ENCODE measurements at regions of chr2 and their contacts with region 1.

Region 1: DNA sequence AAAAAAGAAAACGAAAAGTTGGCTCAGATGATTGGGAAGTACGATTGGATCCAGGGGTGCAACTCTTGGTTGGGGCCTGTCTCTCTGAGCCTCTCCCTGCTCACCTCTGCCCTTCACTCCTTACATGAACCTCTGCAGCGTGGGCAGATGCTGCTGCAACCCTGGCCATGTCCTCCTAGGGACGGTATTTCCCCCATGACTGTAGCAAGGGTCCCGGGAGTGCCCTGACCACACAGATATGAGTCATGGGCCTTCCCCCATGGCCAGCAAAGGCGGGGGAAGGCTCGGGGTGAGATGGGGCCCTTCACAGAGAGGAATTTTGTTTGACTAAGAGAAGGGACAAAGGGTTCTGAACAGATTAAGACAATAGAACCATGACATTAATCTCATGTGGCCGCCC is 129.0 kb downstream of the NCK2 start:
- DNase-seq: peak; percentile 89
- H3K4me3 Mint-ChIP-seq: peak overlapping the region; percentile 3
- H3K27ac Mint-ChIP-seq: peak overlapping the region; percentile 87
- H3K4me1 Mint-ChIP-seq: peaks cover 92% of the 10 kb centered on the region
- H3K27me3 Mint-ChIP-seq: no peaks in the 10 kb centered on the region

Region 2: DNA sequence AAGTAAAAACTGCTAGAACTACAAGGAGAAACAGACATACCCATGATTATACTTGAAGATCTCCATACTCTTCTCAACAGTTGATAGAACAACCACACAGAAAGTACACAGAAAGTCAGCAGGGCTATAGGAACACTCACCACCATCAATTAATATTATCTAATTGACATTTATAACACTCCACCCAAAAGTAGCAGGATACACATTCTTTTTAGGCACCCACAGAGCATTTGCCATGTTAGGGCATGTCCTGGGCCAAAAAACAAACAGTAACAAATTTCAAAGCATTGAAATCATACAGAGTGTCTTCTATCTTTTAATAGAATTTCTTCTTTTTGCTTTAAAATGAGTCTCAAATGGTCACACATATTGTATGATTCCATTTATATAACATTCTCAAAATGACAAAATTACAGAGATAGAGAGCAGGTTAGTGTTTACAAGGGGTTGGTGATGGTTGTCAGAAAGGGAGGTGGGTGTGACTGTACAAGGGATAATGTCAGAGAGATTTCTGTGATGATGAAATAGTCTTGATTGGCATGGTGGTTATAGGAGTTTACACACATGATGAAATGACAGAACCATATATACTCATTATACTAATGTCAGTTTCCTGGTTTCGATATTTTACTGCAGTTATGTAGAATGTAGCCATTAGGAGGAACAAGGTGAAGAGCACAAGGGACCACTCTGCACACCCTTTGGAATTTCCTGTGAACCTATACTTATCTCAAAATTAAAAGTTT is 46.2 kb before region 1 on chr2:
- CTCF ChIA-PET with region 1: no interaction called
- POLR2A ChIA-PET with region 1: no interaction called
- intact Hi-C with region 1: loop called (anchors 2 kb)
- DNase-seq: no peak
- H3K4me3 Mint-ChIP-seq: no peak overlapping the region
- H3K27ac Mint-ChIP-seq: peak overlapping the region; percentile 70
- H3K4me1 Mint-ChIP-seq: peaks cover 94% of the 10 kb centered on the region
- H3K27me3 Mint-ChIP-seq: no peaks in the 10 kb centered on the region

Region 3: GRCh38 chr2:105836840-105837692 is 36.7 kb before region 1 on chr2:
- CTCF ChIA-PET with region 1: no interaction called
- POLR2A ChIA-PET with region 1: no interaction called
- intact Hi-C with region 1: loop called (anchors 2 kb)
- DNase-seq: peak; percentile 74
- H3K4me3 Mint-ChIP-seq: peak overlapping the region; percentile 37
- H3K27ac Mint-ChIP-seq: peak overlapping the region; percentile 81
- H3K4me1 Mint-ChIP-seq: peaks cover 83% of the 10 kb centered on the region
- H3K27me3 Mint-ChIP-seq: no peaks in the 10 kb centered on the region

Region 4: DNA sequence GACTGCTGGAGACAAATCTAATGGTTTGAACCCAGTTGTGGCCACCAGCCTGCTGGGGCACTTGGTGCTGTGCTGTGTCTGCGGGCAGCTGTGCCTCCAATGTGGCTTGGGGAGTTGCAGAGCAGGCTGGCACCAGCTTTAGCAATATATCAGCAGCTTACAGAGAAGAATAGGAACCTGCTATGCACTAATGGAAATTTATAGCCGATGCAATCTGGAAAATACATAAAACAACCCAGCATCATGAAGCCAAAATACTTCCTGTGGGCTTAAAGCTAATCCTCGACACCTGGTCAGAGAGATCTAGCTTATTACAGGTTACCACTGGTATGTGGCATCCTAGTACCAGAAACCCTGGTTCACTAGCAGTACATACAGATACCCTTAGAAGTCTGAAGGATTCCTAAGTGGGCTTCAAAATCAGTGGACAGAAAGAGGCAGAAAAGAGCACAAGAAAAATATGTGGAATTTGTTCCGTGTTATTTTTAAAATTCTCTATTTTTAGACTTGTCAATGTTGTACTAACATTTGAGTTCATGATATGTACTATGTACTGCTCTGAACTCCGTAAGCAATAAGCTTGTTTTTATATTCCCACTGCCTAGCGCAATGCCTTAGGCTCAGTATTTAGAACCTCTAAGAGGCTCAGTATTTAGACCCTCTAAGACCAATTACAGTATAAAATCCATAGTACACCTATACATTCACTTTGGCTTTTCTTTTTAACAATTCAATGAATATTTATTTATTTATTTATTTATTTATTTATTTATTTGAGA is 125.7 kb after region 1 on chr2:
- CTCF ChIA-PET with region 1: no interaction called
- POLR2A ChIA-PET with region 1: no interaction called
- intact Hi-C with region 1: no loop called
- DNase-seq: no peak
- H3K4me3 Mint-ChIP-seq: no peak overlapping the region
- H3K27ac Mint-ChIP-seq: no peak overlapping the region
- H3K4me1 Mint-ChIP-seq: no peaks in the 10 kb centered on the region
- H3K27me3 Mint-ChIP-seq: peaks cover 1% of the 10 kb centered on the region

Measured in activated CD4-positive, alpha-beta memory T cell treated with anti-CD3 and anti-CD28 coated beads for 36 hours (primary cell).